Astrocyte of the cerebellum (primary cell): ENCODE measurements at regions of chr10 and their contacts with region 1.

Region 1: GRCh38 chr10:60964257-60965235 is 20.6 kb upstream of the RHOBTB1 start:
- DNase-seq: peak; percentile 83
- H3K4me3 ChIP-seq: no peak overlapping the region
- CTCF ChIP-seq: peak; percentile 76

Region 2: GRCh38 chr10:60820093-60820754 is 144.3 kb before region 1 on chr10:
- in situ Hi-C with region 1: loop called (anchors 5 kb)
- DNase-seq: peak; percentile 94
- H3K4me3 ChIP-seq: no peak overlapping the region
- CTCF ChIP-seq: peak; percentile 80

Region 3: DNA sequence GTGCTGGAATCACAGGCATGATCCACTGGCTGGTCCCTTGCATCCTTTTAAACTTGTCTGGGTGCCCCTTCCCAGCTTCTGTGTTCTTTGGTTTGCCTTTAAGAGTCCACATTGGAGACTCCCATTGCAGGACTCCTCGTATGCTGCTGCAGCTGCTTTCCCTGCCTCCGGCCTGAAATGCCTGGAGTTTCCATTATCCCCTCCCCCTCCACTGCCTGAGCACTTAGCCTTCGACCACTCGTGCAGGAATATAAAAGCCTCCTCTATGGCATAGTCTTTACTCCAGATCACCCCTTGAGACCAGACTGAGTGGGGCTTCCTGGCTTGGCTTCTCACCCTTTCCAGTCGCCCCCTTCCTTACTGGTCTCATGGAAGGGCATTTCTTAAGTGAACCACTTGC is 100.8 kb before region 1 on chr10:
- in situ Hi-C with region 1: no loop called
- DNase-seq: no peak
- H3K4me3 ChIP-seq: no peak overlapping the region
- CTCF ChIP-seq: no peak

Region 4: GRCh38 chr10:61021926-61022325 is 57.4 kb after region 1 on chr10:
- in situ Hi-C with region 1: no loop called
- DNase-seq: no peak
- H3K4me3 ChIP-seq: no peak overlapping the region
- CTCF ChIP-seq: no peak